ENCODE measurements at regions of chr7 and their contacts with region 1.

Region 1: GRCh38 chr7:73721377-73721817 is 1.9 kb upstream of the STX1A start:
- DNase-seq: no peak
- ATAC-seq: no peak
- H3K4me3 Mint-ChIP-seq: no peak overlapping the region
- H3K27ac Mint-ChIP-seq: no peak overlapping the region
- H3K4me1 Mint-ChIP-seq: peaks cover 26% of the 10 kb centered on the region
- H3K27me3 Mint-ChIP-seq: peaks cover 23% of the 10 kb centered on the region

Region 2: GRCh38 chr7:73738612-73739374 is 17.4 kb after region 1 on chr7 and contains the start of gene ABHD11:
- CTCF ChIA-PET with region 1: interaction called, 42 read pairs
- DNase-seq: peak; percentile 98
- ATAC-seq: peak; percentile 83
- H3K4me3 Mint-ChIP-seq: peak within 1 kb of the TSS; percentile 84
- H3K27ac Mint-ChIP-seq: peak within 1 kb of the TSS; percentile 95
- H3K4me1 Mint-ChIP-seq: peaks cover 21% of the 10 kb centered on the region
- H3K27me3 Mint-ChIP-seq: no peaks in the 10 kb centered on the region
- total RNA-seq, gene ABHD11: 15.9 to 19.2 TPM

Region 3: GRCh38 chr7:73769992-73770859 is 48.8 kb after region 1 on chr7 and contains the start of gene CLDN3:
- CTCF ChIA-PET with region 1: no interaction called
- DNase-seq: no peak
- ATAC-seq: no peak
- H3K4me3 Mint-ChIP-seq: no peak within 1 kb of the TSS
- H3K27ac Mint-ChIP-seq: no peak within 1 kb of the TSS
- H3K4me1 Mint-ChIP-seq: peaks cover 8% of the 10 kb centered on the region
- H3K27me3 Mint-ChIP-seq: peaks cover 47% of the 10 kb centered on the region
- total RNA-seq, gene CLDN3: not detected

Measured in activated CD8-positive, alpha-beta memory T cell treated with anti-CD3 and anti-CD28 coated beads, Interleukin-2, amount 10 ng/mL, durations not matched to agents 7 days and 5 days (primary cell).